Thyroid gland (tissue), 4 donors: ENCODE measurements at regions of chr12 and their contacts with region 1.

Region 1: GRCh38 chr12:76621582-76622024 is 62.0 kb upstream of the OSBPL8 start:
- DNase-seq: peak; percentile 76
- H3K4me3 ChIP-seq: no peak overlapping the region
- H3K27ac ChIP-seq: peak overlapping the region in 2 of 3 donors; percentile 17 to 52
- H3K4me1 ChIP-seq: peaks cover 3 to 20% of the 10 kb centered on the region in 2 donors
- H3K27me3 ChIP-seq: no peaks in the 10 kb centered on the region
- CTCF ChIP-seq: peak; percentile 84 to 99 (median 92)
- POLR2A ChIP-seq: no peak

Region 2: GRCh38 chr12:76790564-76791552 is 169.3 kb after region 1 on chr12:
- intact Hi-C with region 1: loop called (anchors 2 kb)
- DNase-seq: no peak
- H3K4me3 ChIP-seq: no peak overlapping the region
- H3K27ac ChIP-seq: no peak overlapping the region
- H3K4me1 ChIP-seq: peaks cover 3 to 11% of the 10 kb centered on the region in 2 donors
- H3K27me3 ChIP-seq: no peaks in the 10 kb centered on the region
- CTCF ChIP-seq: peak; percentile 50 to 82 (median 70)
- POLR2A ChIP-seq: no peak

Region 3: DNA sequence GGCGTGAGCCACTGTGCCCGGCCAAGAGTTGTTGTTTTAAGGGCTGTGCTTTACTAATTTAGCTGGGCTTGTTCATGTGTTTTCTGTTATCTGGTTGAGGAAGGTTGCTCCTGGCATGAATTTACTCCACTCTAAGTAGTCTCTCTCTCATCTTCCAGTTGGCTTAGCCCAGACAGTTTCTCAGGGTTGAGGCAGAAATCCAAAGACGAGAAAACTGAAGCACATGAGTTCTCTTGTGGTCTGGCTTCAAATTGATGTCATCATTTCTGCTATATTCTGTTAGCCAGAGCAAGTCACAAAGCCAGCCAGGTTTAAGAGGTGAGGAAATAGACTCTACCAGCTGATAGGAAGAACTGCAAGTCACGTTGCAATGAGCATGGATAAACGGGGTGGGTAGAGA is 385.9 kb after region 1 on chr12:
- intact Hi-C with region 1: loop called (anchors 5 kb)
- DNase-seq: no peak
- H3K4me3 ChIP-seq: no peak overlapping the region
- H3K27ac ChIP-seq: no peak overlapping the region
- H3K4me1 ChIP-seq: no peaks in the 10 kb centered on the region
- H3K27me3 ChIP-seq: no peaks in the 10 kb centered on the region
- CTCF ChIP-seq: no peak
- POLR2A ChIP-seq: no peak